ENCODE measurements at regions of chr12 and their contacts with region 1.

Region 1: GRCh38 chr12:122356192-122356635 is 66.3 kb downstream of the CLIP1 start:
- DNase-seq: peak; percentile 73
- ATAC-seq: peak; percentile 91
- H3K4me3 Mint-ChIP-seq: no peak overlapping the region
- H3K27ac Mint-ChIP-seq: peak overlapping the region; percentile 15
- H3K4me1 Mint-ChIP-seq: peaks cover 13% of the 10 kb centered on the region
- H3K27me3 Mint-ChIP-seq: no peaks in the 10 kb centered on the region
- CTCF ChIP-seq: peak; percentile 81

Region 2: DNA sequence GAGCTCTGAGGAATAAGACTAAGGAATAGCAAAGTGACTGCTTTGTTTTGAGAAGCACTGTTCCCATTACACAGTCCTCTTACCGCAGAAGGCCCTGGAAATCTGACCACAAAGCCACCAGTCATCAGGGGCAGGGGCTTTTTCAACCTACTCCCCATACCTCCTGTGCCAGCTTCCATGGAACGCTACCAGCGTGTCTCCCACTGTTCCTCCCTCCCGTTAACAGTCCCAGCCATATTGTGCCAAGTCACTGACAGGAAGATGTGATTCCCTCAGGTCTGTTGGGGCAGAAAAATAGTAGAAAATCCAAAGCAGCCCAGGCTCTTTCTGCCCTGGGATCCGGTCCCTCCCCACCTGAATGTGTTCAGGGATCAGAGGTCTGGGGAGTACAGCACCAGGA is 43.3 kb before region 1 on chr12:
- CTCF ChIA-PET with region 1: interaction called, 10 read pairs
- POLR2A ChIA-PET with region 1: no interaction called
- intact Hi-C with region 1: no loop called
- DNase-seq: no peak
- ATAC-seq: no peak
- H3K4me3 Mint-ChIP-seq: no peak overlapping the region
- H3K27ac Mint-ChIP-seq: no peak overlapping the region
- H3K4me1 Mint-ChIP-seq: no peaks in the 10 kb centered on the region
- H3K27me3 Mint-ChIP-seq: no peaks in the 10 kb centered on the region
- CTCF ChIP-seq: no peak

Region 3: DNA sequence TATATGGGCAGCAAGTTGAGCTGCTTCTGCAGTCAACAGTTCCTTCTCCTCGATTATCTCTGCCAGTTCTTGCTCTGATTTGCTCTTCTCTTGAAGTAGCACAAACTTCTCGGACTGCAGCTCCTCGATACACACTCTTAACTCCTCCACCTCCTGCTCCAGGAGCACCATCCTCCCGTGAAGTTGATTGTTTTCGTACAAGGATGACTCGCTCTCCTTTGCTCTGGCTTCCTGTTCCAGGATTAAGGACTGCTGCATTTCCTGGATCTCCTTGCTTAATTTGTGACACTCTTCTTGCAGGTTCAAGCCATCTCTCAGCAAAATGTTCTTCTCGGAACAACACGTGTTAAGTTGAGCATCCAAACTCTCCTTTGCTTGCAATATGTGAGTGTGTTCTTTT is 33.7 kb before region 1 on chr12:
- CTCF ChIA-PET with region 1: interaction called, 16 read pairs
- POLR2A ChIA-PET with region 1: no interaction called
- intact Hi-C with region 1: no loop called
- DNase-seq: no peak
- ATAC-seq: no peak
- H3K4me3 Mint-ChIP-seq: no peak overlapping the region
- H3K27ac Mint-ChIP-seq: no peak overlapping the region
- H3K4me1 Mint-ChIP-seq: peaks cover 11% of the 10 kb centered on the region
- H3K27me3 Mint-ChIP-seq: no peaks in the 10 kb centered on the region
- CTCF ChIP-seq: no peak

Region 4: GRCh38 chr12:122336015-122336946 is 19.9 kb before region 1 on chr12:
- CTCF ChIA-PET with region 1: interaction called, 49 read pairs
- POLR2A ChIA-PET with region 1: no interaction called
- intact Hi-C with region 1: no loop called
- DNase-seq: peak; percentile 68
- ATAC-seq: peak; percentile 68
- H3K4me3 Mint-ChIP-seq: no peak overlapping the region
- H3K27ac Mint-ChIP-seq: peak overlapping the region; percentile 75
- H3K4me1 Mint-ChIP-seq: peaks cover 7% of the 10 kb centered on the region
- H3K27me3 Mint-ChIP-seq: no peaks in the 10 kb centered on the region
- CTCF ChIP-seq: peak; percentile 79

Region 5: GRCh38 chr12:122374707-122375106 is 18.5 kb after region 1 on chr12:
- CTCF ChIA-PET with region 1: interaction called, 16 read pairs
- POLR2A ChIA-PET with region 1: no interaction called
- intact Hi-C with region 1: no loop called
- DNase-seq: no peak
- ATAC-seq: no peak
- H3K4me3 Mint-ChIP-seq: no peak overlapping the region
- H3K27ac Mint-ChIP-seq: no peak overlapping the region
- H3K4me1 Mint-ChIP-seq: peaks cover 8% of the 10 kb centered on the region
- H3K27me3 Mint-ChIP-seq: no peaks in the 10 kb centered on the region
- CTCF ChIP-seq: no peak